ENCODE measurements at regions of chr17 and their contacts with region 1.

Region 1: DNA sequence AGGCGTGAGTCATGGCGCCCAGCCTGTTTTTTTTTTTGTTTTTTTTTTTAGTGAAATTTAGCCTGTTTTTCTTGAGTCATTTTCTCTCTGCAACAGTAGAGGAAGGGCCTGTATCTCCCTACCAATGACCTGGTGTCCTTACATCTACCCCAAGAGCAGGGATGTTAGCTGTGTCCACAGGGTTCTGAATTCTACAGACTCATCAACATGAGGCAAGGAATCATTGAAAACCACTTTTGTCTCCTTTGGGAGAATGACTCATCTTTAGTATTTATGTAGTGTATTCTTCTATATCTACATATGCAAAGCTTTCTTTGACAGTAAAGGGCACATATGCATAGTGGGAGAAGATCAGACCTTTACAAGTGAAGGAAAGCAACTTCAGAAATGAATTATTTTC is 105.3 kb downstream of the SPECC1 start:
- DNase-seq: no peak
- H3K4me3 ChIP-seq: no peak overlapping the region
- H3K27ac ChIP-seq: no peak overlapping the region
- H3K4me1 ChIP-seq: no peaks in the 10 kb centered on the region
- H3K27me3 ChIP-seq: no peaks in the 10 kb centered on the region
- CTCF ChIP-seq: no peak
- EP300 ChIP-seq: no peak
- POLR2A ChIP-seq: no peak

Region 2: GRCh38 chr17:20009302-20010098 is 105.0 kb before region 1 on chr17 and contains the start of gene SPECC1:
- intact Hi-C with region 1: loop called (anchors 5 kb)
- DNase-seq: no peak
- H3K4me3 ChIP-seq: peak within 1 kb of the TSS; percentile 76 to 82 (median 78)
- H3K27ac ChIP-seq: peak within 1 kb of the TSS; percentile 78 to 84 (median 81)
- H3K4me1 ChIP-seq: peaks cover 3 to 23% (median 22%) of the 10 kb centered on the region in 4 donors
- H3K27me3 ChIP-seq: peaks cover 0 to 6% (median 0%) of the 10 kb centered on the region in 4 donors
- CTCF ChIP-seq: peak; percentile 93 to 99 (median 99)
- EP300 ChIP-seq: no peak
- POLR2A ChIP-seq: no peak
- total RNA-seq, gene SPECC1: 16.7 to 28.8 (median 24.7) TPM

Measured in esophagus muscularis mucosa (tissue), 4 donors.